Activated CD4-positive, alpha-beta T cell treated with anti-CD3 and anti-CD28 coated beads, Interleukin-2, amount 10 ng/mL, durations not matched to agents 7 days and 5 days (primary cell): ENCODE measurements at regions of chr1 and their contacts with region 1.

Region 1: DNA sequence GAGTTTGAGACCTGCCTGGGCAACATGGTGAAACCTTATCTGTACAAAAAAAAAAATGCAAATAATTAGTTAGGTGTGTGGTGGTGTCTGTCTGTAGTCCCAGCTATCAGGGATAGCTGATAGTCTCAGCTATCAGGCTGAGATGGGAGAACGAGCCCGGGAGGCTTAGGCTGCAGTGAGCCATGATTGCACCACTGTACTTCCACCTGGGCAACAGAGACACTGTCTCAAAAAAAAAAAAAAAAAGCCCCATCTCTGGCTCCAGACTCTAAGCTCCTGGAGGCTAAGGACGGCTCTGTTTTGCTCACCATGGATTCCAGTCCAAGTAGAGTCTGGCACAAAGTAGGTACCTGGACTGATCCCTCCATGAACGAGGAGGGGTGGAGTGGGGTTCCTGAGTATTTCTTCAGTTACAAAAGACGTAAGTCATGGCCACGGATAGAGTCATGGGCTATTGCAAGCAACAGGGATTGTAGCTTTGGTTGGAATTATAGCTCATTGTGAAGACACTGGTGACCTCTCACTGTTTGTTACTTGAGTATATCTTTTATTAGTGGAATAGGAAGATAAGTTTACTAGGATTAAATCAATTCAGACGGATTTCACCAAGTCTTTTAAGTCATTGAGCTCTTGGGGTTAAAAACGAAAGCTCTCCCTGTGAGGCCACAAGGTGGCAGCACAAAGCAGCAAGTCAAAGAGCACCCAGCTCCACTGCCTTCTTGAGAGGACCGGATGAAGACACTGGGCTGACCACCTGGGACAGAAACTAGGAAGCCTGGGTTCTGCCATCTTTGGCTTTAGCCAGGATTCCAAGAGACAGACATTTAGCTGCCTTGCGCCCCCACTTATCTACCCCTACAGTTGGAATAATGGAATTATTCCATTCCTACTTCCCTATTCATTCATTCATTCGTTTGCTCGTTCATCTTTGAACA is 35.6 kb upstream of the TMEM61 start:
- DNase-seq: peak; percentile 78
- H3K4me3 Mint-ChIP-seq: no peak overlapping the region
- H3K27ac Mint-ChIP-seq: no peak overlapping the region
- H3K4me1 Mint-ChIP-seq: peaks cover 16% of the 10 kb centered on the region
- H3K27me3 Mint-ChIP-seq: peaks cover 8% of the 10 kb centered on the region

Region 2: DNA sequence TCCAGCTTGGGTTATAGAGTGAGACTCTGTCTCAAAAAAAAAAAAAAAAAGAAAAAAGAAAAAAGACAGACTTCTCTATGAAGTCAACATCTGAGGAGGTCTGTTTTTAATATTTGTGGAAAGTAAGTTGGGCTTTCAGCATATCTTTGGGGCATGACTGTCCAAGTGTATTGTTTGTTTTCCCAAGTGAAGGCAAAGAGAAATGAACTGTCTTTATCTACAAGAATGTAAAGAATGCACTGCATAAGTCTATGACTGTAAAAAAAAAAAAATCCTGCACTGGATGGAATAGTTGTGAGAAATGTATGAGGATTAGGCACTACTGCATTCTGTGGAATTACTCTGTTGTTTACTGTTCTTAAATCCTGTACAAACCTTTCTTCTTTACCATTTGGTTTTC is 10.0 kb before region 1 on chr1:
- CTCF ChIA-PET with region 1: interaction called, 10 read pairs
- POLR2A ChIA-PET with region 1: no interaction called
- DNase-seq: no peak
- H3K4me3 Mint-ChIP-seq: no peak overlapping the region
- H3K27ac Mint-ChIP-seq: no peak overlapping the region
- H3K4me1 Mint-ChIP-seq: peaks cover 3% of the 10 kb centered on the region
- H3K27me3 Mint-ChIP-seq: peaks cover 42% of the 10 kb centered on the region

Region 3: DNA sequence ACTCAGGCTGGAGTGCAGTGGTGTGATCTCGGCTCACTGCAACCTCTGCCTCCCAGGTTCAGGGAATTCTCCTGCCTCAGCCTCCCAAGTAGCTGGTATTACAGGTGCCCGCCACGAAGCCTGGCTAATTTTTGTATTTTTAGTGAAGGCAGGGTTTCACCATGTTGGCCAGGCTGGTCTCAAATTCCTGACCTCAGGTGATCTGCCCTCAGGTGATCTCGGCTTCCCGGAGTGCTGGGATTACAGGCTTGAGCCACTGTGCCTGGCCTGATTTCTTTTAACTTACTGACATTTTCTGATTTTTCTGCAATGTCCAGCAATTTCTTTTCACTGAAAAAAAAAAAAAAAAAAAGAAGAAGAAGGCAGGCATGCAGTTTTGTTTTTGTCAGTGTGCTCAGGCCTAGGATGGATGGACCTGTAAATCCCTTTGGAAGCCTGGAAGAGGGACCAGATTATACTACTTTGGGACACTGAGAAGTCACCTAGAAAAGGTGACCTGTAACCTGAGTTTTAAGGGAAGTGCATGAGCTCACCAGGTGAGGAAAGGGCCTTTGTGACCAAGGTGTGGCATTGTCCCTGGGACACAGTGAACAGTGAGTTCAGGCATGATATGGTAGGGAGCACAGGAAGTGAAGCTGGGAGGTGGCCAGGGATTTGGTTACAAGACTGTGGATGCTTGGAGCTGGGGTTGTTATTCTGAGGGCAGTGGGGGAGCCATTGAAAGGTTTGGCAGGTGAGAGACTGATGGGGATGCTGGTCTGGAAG is 32.8 kb after region 1 on chr1:
- CTCF ChIA-PET with region 1: interaction called, 14 read pairs
- POLR2A ChIA-PET with region 1: interaction called, 3 read pairs
- DNase-seq: no peak
- H3K4me3 Mint-ChIP-seq: no peak overlapping the region
- H3K27ac Mint-ChIP-seq: no peak overlapping the region
- H3K4me1 Mint-ChIP-seq: no peaks in the 10 kb centered on the region
- H3K27me3 Mint-ChIP-seq: peaks cover 60% of the 10 kb centered on the region

Region 4: GRCh38 chr1:54996359-54996868 is 51.5 kb after region 1 on chr1:
- CTCF ChIA-PET with region 1: interaction called, 94 read pairs
- POLR2A ChIA-PET with region 1: no interaction called
- DNase-seq: peak; percentile 82
- H3K4me3 Mint-ChIP-seq: no peak overlapping the region
- H3K27ac Mint-ChIP-seq: peak overlapping the region; percentile 84
- H3K4me1 Mint-ChIP-seq: peaks cover 28% of the 10 kb centered on the region
- H3K27me3 Mint-ChIP-seq: peaks cover 35% of the 10 kb centered on the region

Region 5: GRCh38 chr1:55021965-55022546 is 77.2 kb after region 1 on chr1:
- CTCF ChIA-PET with region 1: interaction called, 30 read pairs
- POLR2A ChIA-PET with region 1: no interaction called
- DNase-seq: peak; percentile 73
- H3K4me3 Mint-ChIP-seq: no peak overlapping the region
- H3K27ac Mint-ChIP-seq: no peak overlapping the region
- H3K4me1 Mint-ChIP-seq: peaks cover 3% of the 10 kb centered on the region
- H3K27me3 Mint-ChIP-seq: no peaks in the 10 kb centered on the region

Region 6: GRCh38 chr1:55071477-55071876 is 126.6 kb after region 1 on chr1:
- CTCF ChIA-PET with region 1: no interaction called
- POLR2A ChIA-PET with region 1: no interaction called
- DNase-seq: peak; percentile 23
- H3K4me3 Mint-ChIP-seq: no peak overlapping the region
- H3K27ac Mint-ChIP-seq: peak overlapping the region; percentile 50
- H3K4me1 Mint-ChIP-seq: peaks cover 20% of the 10 kb centered on the region
- H3K27me3 Mint-ChIP-seq: no peaks in the 10 kb centered on the region

Region 7: GRCh38 chr1:55301912-55302311 is 357.0 kb after region 1 on chr1:
- CTCF ChIA-PET with region 1: no interaction called
- POLR2A ChIA-PET with region 1: no interaction called
- DNase-seq: no peak
- H3K4me3 Mint-ChIP-seq: no peak overlapping the region
- H3K27ac Mint-ChIP-seq: no peak overlapping the region
- H3K4me1 Mint-ChIP-seq: no peaks in the 10 kb centered on the region
- H3K27me3 Mint-ChIP-seq: peaks cover 10% of the 10 kb centered on the region